Lower leg skin (tissue), 4 donors: ENCODE measurements at regions of chr2 and their contacts with region 1.

Region 1: DNA sequence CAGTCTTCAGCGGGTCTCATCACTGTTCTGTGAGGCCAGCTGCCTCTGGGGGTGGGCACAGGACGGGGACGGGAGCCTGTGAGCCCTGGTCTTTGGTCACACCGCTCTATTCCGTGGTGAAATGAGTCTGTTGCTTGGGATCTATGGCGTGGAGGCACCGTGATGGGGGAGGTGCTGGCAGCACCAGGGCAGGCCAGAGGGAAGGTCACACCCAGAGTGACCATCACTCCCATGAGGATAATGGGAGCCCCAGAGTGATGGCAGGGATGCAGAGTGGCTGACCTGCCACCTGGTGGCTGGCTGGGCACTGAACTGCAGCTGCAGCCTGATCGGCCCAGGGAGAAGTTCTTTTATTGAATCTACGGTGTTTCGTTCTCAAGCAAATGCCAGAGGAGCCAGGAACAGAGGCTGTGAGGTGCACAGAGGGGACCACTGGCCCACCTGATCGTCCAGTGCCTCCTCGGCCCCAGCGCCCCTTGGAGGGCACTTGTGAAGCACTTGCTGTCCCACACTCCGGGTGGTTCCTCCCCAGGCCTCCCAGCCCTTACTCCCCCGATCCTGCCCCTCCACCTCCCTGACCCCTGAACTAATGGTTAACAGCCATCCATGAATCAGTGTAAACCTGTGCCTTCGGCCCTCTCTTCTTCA is 17.9 kb downstream of the KCNIP3 start:
- DNase-seq: no peak
- H3K4me3 ChIP-seq: no peak overlapping the region
- CTCF ChIP-seq: no peak
- POLR2A ChIP-seq: no peak

Region 2: GRCh38 chr2:95106081-95106480 is 209.0 kb before region 1 on chr2:
- intact Hi-C with region 1: no loop called
- DNase-seq: no peak
- H3K4me3 ChIP-seq: no peak overlapping the region
- CTCF ChIP-seq: no peak
- POLR2A ChIP-seq: no peak

Region 3: DNA sequence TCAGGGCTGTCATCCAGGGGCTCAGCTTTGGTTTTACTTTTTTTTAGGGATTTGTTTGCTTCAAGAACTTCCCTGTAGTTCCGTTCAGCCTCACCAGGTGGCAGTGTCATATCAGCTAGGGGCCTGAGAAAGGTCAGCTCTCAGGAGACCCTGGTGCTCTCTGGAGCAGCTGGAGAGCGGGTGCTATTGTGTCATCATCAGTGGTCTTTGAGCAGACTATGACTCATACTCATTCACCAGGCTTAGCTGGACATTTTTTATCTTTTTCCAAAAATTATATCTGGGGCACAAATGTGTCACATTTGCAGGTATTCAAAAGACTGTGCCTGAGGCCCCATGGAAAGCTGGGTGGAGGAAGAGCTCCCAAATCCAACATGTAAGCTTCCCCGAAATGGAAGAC is 83.4 kb before region 1 on chr2:
- intact Hi-C with region 1: loop called (anchors 10 kb)
- DNase-seq: peak in 1 of 2 donors; percentile 57
- H3K4me3 ChIP-seq: no peak overlapping the region
- CTCF ChIP-seq: peak in 1 of 3 donors; percentile 32
- POLR2A ChIP-seq: no peak

Region 4: DNA sequence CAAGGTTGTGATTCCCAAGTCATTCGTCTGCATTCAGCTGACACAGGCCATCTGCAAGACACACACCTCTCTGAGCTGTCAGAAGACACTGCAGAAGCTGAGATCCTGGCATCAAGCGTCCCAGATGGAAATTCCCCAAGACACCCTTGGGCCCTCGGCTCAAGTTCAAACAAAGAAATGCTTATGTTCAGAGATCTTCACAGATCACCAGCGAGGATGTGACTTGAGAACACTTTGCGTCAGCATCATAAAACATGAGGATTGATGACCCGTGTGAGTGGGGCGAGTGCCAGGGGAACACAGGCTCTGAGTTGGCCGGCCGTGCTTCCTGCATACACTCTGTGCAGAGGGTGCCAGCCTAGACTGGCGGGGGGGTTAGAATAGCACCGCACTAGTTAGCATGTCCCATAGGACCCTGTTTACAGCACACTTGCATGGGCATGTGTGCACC is 18.8 kb after region 1 on chr2:
- intact Hi-C with region 1: no loop called
- DNase-seq: peak; percentile 84 to 91
- H3K4me3 ChIP-seq: no peak overlapping the region
- CTCF ChIP-seq: no peak
- POLR2A ChIP-seq: no peak